AG04450 (cell line): ENCODE measurements at regions of chr1 and their contacts with region 1.

Region 1: DNA sequence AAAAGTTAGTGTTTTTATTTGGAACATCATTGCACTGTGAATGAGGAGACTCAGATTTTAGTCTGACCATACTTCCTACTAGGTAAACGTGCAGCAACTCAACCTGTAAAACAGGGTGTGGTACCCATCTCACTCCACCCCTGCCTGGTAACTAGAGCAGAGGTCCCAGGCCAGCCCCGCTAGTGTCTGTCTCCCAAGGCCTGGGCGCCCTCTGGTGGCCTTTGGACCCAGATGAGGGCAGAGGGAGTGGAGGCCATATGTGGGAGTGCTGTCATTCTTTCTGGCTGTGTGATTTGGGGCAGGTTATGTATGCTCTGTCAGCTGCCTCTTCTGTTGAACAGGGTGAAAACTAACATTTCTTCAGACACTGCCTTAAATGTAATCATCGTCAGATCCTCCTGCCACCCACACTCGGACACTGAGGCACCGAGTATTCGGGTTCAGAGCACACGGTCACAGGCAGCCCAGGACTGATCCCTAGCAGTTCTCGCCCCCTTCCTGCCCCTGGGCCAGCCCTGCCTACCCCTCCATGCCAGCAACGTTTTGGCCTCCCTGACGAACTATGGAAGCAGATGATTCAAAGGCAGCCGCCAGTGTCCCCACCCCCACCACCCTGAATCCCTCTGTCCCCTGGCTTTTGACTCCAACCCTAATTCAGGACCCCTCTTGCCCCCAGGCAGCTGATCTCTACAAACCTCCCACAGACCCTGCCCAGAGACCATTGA is 76.0 kb downstream of the CD247 start:
- DNase-seq: peak; percentile 23
- H3K4me3 ChIP-seq: no peak overlapping the region
- H3K27ac ChIP-seq: no peak overlapping the region
- H3K27me3 ChIP-seq: peaks cover 19% of the 10 kb centered on the region
- CTCF ChIP-seq: peak; percentile 87

Region 2: DNA sequence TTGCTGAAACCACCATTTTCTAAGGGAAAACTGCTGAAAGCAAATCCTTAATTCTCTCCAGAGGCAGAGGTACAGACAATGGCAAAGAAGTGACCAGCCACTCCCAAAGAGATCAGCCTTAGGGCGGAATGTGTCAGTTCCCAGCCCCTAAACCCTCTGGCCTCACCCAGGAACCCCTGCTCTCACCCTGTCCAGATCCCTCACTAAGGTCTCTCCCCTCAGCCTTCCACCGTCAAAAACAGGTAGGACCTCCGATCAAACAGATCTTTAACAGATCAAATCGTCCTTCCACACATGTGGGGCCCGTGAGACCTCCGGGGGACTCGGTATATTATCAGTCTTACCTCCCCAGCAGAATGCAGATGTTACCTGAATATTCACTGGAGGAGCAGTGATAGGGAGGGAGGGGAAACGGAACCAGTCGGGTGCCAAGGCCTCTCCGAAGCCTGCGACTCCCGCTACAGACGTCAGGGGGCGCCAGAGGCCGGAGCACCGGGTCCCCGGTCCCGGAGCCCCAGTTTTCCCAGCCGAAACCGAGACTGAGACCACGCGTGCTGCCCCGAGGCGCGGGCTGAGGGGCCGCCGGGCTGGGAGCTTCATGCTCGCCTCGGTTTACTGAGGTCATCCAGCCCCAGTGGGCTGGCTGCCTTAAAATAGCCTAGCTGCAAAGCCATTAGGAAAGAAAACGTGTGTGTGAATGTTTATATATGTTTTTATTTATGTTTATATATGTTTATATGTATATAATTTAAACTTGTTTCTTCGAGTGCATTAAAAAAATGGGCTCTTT is 375.8 kb before region 1 on chr1:
- CTCF ChIA-PET with region 1: interaction called, 11 read pairs
- POLR2A ChIA-PET with region 1: no interaction called
- DNase-seq: no peak
- H3K4me3 ChIP-seq: peak overlapping the region; percentile 36; the same call in 1 of the 2 replicates
- H3K27ac ChIP-seq: no peak overlapping the region
- H3K27me3 ChIP-seq: no peaks in the 10 kb centered on the region
- CTCF ChIP-seq: peak; percentile 94

Region 3: DNA sequence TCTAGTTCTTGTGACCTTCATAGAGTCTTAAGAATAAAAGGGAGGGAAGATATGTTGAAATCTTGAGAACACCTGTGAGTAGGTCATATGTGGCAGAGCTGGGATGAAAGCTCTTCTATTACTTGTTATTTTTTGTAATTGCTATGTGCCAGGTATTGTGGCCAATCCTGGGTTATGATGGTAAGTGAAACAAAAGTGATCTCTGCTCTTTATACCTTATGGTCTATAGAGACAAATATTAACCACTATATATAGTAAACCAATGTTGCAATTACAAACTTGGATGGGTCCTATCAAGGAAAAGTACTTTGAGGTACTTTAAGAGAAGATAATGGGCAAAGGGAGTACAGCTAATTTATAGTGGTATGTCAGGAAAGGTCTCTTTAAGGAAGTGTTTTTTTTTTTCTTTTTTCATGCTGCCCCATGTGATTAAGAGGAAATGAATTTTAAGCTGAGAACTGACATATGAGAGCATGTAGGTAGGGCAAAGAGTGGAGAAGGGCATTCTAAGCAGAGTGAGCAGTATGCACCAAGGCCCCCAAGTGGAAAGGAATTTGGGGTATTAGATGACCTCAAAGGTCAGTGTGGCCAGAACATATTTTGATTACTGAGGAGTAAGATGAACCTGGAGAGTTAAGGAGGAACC is 178.3 kb before region 1 on chr1:
- CTCF ChIA-PET with region 1: interaction called, 105 read pairs
- POLR2A ChIA-PET with region 1: interaction called, 3 read pairs
- DNase-seq: no peak
- H3K4me3 ChIP-seq: no peak overlapping the region
- H3K27ac ChIP-seq: no peak overlapping the region
- H3K27me3 ChIP-seq: no peaks in the 10 kb centered on the region
- CTCF ChIP-seq: no peak

Region 4: GRCh38 chr1:167270349-167271092 is 171.8 kb before region 1 on chr1:
- CTCF ChIA-PET with region 1: interaction called, 105 read pairs
- POLR2A ChIA-PET with region 1: interaction called, 3 read pairs
- DNase-seq: no peak
- H3K4me3 ChIP-seq: no peak overlapping the region
- H3K27ac ChIP-seq: no peak overlapping the region
- H3K27me3 ChIP-seq: no peaks in the 10 kb centered on the region
- CTCF ChIP-seq: no peak

Region 5: GRCh38 chr1:167401260-167401873 is 40.9 kb before region 1 on chr1:
- CTCF ChIA-PET with region 1: interaction called, 18 read pairs
- POLR2A ChIA-PET with region 1: no interaction called
- DNase-seq: peak; percentile 2
- H3K4me3 ChIP-seq: no peak overlapping the region
- H3K27ac ChIP-seq: no peak overlapping the region
- H3K27me3 ChIP-seq: no peaks in the 10 kb centered on the region
- CTCF ChIP-seq: peak; percentile 65